ENCODE measurements at regions of chr1 and their contacts with region 1.

Region 1: DNA sequence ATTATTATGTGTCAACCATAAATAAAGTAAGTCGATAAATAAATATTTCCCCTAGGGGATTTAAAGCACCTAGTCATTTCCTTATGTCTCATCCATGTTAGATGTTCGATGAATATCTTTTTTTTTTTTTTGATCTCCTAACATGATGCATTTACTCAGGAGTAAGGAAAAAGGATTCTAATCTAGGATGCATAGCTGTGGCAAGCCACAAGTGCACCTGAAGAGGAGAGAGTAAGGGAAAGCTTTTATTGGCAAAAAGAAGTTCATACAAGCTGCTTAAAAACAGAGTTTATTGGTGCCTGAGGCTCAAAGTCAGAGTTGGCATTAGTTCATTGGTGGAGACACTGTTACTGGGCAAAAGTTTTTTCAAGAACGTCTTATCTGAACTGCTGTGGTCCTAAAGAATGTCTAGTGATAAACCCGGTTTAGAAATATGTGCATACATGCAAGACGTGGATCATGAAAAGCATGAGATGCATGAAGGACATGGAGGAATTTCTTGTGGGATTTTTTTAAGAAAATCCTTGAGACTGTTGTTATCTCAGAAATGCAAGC is 51.7 kb downstream of the SWT1 start:
- DNase-seq: no peak
- ATAC-seq: no peak
- H3K4me3 ChIP-seq: no peak overlapping the region
- H3K27ac ChIP-seq: no peak overlapping the region
- H3K4me1 ChIP-seq: no peaks in the 10 kb centered on the region
- H3K27me3 ChIP-seq: no peaks in the 10 kb centered on the region
- CTCF ChIP-seq: no peak

Region 2: GRCh38 chr1:185681034-185681633 is 472.4 kb after region 1 on chr1:
- CTCF ChIA-PET with region 1: no interaction called
- POLR2A ChIA-PET with region 1: no interaction called
- in situ Hi-C with region 1: no loop called
- intact Hi-C with region 1: loop called (anchors 10 kb)
- DNase-seq: no peak
- ATAC-seq: peak; percentile 89
- H3K4me3 ChIP-seq: no peak overlapping the region
- H3K27ac ChIP-seq: no peak overlapping the region
- H3K4me1 ChIP-seq: no peaks in the 10 kb centered on the region
- H3K27me3 ChIP-seq: no peaks in the 10 kb centered on the region
- CTCF ChIP-seq: peak; percentile 72